Aorta (tissue), 5 donors: ENCODE measurements at regions of chr3 and their contacts with region 1.

Region 1: DNA sequence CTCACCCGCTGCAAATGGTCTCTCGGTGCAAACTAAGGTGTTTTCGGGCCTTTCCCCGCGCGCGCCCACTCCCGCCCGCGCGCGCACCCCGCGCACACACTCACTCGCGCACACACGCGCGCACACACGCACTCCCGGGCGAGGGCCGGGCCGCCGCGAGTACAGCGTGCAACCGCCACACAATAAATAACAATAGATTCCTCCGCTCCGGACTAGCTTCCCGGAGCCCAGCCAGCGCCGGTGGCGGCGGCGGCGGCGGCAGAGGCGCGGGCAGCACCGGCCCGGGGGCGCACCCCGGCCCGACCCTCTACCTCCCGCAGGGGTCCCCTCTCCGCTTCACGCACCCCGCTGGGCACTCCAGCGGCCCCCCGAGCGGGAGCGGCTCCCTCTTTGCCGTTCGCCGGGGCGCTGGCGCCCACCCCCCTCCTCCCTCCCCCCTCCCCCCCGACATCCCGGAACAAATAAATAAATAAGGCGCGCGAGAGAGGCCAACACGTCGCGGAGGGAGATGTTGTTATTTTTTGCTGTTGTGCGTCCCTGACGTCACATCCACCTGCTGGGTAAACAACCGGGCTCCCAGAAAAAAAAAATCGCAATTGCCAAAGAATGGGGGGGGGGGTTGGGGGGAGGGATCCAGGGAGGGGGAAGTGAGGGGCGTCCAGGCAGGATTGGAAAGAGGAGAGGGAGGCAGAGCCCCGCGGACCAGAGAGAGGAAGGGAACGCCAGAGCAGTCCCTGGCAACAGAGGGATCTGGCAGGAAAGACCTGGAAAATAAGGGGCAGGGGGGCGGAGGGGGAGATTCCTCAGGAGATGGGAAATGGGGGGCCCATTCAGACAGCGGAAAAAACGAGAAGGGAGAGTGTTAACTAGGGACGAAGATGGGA is at the start of gene FOXP1:
- DNase-seq: peak; percentile 85 to 90
- ATAC-seq: peak; percentile 73
- H3K4me3 ChIP-seq: peak within 1 kb of the TSS; percentile 67 to 82
- H3K27ac ChIP-seq: peak within 1 kb of the TSS; percentile 97 to 99
- H3K4me1 ChIP-seq: no peaks in the 10 kb centered on the region
- H3K27me3 ChIP-seq: no peaks in the 10 kb centered on the region
- total RNA-seq, gene FOXP1: 187 to 263 TPM

Region 2: DNA sequence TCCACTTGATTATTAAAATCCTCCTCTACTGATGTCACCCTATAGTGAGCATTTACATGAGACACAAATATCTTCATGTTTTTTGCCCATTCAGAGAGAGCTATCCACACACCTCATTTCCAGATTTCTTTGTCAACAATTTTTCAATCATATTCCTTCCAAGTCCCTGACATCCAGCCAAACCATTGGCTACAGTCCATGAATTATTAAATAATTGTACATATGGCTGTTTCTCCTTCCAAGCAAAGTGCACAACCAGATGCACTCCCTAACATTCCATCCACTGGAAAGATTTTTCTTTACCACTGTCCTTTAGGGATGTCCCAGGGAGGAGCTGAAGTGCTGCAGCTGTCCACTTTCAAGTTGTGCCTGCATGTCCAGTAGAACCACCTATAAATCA is 943.3 kb before region 1 on chr3:
- intact Hi-C with region 1: no loop called
- DNase-seq: no peak
- ATAC-seq: no peak
- H3K4me3 ChIP-seq: no peak overlapping the region
- H3K27ac ChIP-seq: no peak overlapping the region
- H3K4me1 ChIP-seq: no peaks in the 10 kb centered on the region
- H3K27me3 ChIP-seq: no peaks in the 10 kb centered on the region

Region 3: DNA sequence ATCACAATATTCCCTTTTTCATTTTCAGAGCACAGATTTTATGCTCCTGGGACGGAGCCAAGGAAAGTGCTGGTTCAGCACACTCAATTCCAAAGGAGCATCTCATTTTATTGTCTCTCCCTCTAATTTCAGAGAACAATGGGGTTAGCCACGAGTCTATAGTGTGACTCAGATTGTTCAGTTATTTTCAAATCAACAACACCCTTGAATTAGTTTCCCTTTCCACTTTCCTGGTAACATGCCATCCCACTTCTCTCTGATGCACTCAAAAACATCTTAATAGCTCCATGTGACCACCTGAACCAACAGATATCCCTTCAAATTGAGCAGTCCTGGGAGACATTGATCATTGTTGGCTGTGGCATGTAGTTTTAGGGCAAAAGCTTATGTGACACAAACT is 881.7 kb before region 1 on chr3:
- intact Hi-C with region 1: loop called in 1 of 2 experiments (anchors 10 kb)
- DNase-seq: no peak
- ATAC-seq: no peak
- H3K4me3 ChIP-seq: no peak overlapping the region
- H3K27ac ChIP-seq: no peak overlapping the region
- H3K4me1 ChIP-seq: peaks cover 8 to 15% of the 10 kb centered on the region in 2 donors
- H3K27me3 ChIP-seq: no peaks in the 10 kb centered on the region

Region 4: DNA sequence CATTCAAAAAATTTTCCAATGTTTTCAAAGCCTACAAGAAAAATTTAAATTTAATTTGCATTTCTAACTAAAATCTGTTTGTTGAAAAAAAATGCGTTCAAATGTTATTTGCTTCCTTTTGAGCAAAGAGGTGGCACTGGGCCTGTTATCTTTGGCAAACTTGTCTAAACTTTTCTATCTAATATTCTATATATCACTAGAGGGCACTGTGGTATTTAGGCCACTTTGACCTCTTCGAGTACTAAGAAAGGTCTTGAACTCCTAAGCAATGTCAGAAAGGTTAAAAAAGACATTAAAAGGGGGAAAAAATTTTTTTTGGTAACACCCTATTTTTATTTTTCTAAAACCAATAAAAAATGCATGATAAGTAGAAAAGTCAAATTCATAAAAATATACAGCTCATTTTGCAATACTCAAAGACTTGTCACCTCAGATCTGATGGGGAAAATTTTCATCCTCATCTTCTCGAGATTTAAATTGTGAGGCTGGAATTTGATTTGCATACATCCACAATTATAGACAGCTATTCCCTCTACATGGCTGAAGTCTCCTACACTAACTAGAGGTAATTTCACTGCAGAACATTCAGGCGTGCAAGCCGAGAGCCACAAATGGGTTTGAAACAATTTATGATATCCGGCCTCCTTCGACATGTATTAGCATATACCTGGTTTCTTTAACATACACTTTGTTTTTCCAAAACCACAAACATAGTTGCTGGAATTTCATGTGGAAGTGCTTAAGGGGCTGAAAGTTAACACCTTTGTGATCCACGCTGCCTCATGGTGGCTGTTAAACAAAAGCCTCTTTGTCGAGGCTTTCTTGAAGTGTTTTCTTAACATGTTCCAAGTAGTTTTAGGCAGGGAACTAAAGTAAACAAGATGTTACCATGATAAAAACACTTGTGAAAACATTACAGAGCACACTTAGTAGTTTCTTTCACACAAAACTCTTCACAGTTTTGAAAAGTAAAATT is 576.7 kb before region 1 on chr3:
- intact Hi-C with region 1: loop called in 1 of 2 experiments (anchors 10 kb)
- DNase-seq: no peak
- ATAC-seq: peak; percentile 75
- H3K4me3 ChIP-seq: no peak overlapping the region
- H3K27ac ChIP-seq: peak overlapping the region; percentile 63 to 67
- H3K4me1 ChIP-seq: peaks cover 11 to 14% of the 10 kb centered on the region in 2 donors
- H3K27me3 ChIP-seq: no peaks in the 10 kb centered on the region

Region 5: DNA sequence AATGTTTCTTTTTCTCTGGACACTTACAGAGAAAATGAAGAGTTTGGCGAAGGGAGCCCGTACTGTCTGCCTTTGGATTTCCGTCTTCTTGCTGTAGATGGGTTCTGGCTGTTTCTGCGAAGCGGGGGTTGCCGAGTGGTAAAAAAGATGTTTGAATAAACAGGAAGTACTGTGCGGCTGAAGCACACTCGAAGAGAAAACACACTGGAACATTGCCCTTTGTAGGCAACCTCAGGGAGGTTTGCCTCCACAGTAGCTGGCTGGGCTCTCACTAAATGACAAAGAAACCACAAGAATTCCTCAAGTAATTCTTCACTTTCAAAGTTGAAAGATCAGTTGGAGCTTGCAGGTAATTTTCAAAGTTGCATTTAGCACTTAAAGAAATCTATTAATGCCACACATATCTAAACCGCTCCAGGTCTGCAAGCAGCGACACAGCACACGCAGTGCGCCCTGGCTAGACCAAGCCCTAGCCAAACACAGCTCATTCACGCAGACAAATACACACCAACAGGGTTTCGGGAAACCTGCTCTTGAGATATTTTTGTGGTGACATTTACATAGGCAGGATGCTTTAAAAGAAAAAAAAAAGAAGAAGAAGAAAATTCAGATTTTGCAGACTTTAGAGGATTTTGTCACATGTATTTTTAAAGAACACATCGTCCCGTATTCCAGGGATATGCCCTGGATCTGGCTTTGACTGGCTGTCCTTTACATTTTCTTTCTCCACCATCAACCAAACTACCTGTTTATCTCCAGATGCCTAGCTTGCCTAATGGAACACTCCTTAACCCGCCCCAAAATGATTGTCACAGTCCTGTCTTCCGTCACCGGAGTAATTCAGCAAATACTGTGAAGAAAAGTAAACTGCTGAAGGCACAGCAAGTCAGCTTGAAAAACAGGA is 453.1 kb before region 1 on chr3:
- intact Hi-C with region 1: loop called in 1 of 2 experiments (anchors 5 kb)
- DNase-seq: peak in 1 of 2 donors; percentile 82
- ATAC-seq: peak; percentile 69
- H3K4me3 ChIP-seq: peak overlapping the region; percentile 89 to 99
- H3K27ac ChIP-seq: peak overlapping the region; percentile 98 to 99
- H3K4me1 ChIP-seq: peaks cover 0 to 2% of the 10 kb centered on the region in 2 donors
- H3K27me3 ChIP-seq: no peaks in the 10 kb centered on the region

Region 6: DNA sequence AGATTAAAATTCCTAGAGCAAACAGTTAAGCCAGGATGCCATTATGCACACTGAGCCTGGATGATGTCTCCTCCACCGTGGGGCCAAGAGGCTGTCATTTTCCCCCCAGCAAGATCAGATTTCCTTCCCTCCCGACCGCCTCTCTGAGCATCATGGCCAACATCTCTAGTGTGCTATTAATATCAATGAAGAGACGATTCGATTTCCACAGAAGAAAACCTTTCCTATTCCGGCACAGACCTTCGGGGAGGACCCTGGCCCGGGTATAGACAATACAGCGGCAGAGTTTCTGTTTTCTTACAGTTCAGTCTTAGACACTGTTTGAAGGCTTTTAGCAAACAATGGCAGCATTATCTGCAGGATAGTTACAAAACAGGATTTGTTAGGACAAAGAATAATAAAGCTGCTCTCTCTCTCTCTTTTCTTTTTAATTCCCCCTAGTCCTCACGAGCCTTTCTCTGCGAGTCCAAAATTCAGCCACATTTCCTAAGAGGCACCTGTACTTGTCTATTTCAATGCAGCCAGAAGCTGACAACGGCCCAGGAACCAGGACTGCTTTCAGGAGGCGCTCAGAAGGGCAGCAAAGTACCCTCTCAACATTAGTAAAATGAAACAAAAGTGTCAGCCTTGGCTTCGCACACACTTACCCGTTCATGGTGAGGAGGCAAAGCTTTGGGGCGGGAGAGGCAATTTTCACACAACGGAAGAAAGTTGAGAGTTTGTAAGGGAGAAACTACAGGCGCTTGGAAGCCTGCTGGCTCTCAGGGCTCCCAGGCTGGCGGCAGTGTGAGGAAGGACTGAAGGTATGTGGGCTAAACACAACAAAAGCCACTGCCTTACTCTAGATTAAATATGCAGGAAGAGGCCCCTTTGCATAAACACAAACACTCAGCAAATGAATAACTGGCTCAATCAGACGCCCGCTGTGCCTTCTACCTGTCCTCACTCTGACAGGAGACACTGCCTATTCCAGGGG is 278.3 kb before region 1 on chr3:
- intact Hi-C with region 1: loop called (anchors 5 to 10 kb)
- DNase-seq: no peak
- ATAC-seq: peak; percentile 77
- H3K4me3 ChIP-seq: peak overlapping the region; percentile 59 to 93
- H3K27ac ChIP-seq: peak overlapping the region; percentile 23 to 88
- H3K4me1 ChIP-seq: peaks cover 0 to 8% of the 10 kb centered on the region in 2 donors
- H3K27me3 ChIP-seq: no peaks in the 10 kb centered on the region

Region 7: DNA sequence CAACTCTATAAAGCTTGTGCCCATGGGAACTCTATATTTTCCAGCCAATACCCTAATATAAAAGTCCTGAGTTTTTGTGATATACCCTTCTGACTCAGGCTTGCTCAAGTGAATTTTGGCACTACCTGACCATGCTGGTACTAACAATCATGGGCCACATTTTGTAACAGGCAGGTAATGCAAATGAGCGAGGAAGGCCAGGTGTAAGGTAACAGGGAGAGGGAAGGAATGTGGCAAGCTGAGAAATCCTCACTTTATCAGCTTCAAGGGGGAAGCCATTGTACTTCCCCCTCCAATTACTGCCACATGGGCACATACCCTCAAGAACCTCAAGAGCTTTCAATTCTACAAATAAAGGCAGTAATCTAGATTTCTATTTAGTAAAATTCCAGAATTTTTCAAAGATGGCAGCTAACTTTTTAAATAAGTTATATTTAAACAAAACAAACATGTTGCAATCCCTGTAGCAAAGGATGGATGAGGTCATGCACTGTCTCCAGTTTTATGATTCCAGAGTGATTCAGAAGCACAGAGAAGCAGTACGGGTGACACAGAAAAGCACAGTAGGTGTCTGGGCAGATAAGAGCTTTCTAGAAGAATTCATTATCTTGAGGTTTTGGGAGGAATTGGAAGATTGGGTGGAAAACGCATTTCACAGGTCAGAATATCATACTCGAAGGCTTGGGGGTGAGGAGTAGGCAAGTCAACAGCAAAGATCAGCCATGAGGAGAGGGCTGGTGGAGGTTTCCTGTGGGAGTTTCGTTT is 87.9 kb before region 1 on chr3:
- intact Hi-C with region 1: loop called (anchors 1 to 5 kb)
- DNase-seq: no peak
- ATAC-seq: peak; percentile 69
- H3K4me3 ChIP-seq: no peak overlapping the region
- H3K27ac ChIP-seq: peak overlapping the region; percentile 70 to 91
- H3K4me1 ChIP-seq: peaks cover 4 to 11% of the 10 kb centered on the region in 2 donors
- H3K27me3 ChIP-seq: no peaks in the 10 kb centered on the region

Region 8: DNA sequence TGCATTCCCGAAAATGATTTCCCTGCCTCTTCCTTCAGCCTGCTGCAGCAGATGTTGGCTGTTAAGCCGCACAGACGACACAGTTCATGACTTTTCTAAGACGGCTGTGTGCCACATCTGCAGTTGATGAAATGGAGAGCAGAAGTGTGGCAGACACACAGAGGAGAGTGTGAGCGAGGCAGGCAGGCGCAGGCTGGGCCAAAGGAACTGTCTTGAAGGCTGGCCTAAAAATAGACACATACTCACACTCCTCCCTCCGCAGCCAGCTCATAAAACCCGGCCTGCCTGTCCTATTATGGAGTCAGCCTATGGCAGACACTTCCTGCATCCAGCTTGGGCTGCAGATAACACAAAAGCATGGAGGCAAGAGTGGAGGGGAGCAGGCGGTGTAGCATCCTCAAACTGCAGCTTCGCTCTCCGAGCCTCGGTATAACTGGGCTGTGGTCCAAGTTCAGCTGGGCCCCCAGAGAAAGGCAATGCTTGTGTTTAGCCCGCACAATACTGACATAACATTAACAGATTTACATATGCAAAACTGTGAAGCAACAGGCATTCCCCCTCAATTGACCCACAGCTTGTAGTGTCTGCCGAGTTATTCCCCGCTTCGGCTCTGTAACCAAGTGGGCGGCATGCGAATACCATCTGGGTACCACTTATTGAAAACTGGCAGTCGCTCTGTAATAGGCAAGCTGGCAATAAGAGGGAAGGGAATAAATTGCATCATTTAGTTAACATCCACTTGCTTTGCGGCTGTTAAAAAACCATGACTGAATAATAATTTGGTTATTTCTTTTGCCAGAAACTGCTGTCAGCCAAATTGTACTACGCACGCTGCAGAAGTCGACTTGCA is 41.1 kb before region 1 on chr3:
- intact Hi-C with region 1: loop called (anchors 1 to 5 kb)
- DNase-seq: peak; percentile 92 to 94
- ATAC-seq: peak; percentile 93
- H3K4me3 ChIP-seq: peak overlapping the region; percentile 22 to 84
- H3K27ac ChIP-seq: peak overlapping the region; percentile 61 to 100
- H3K4me1 ChIP-seq: peaks cover 3 to 6% of the 10 kb centered on the region in 2 donors
- H3K27me3 ChIP-seq: no peaks in the 10 kb centered on the region

Region 9: DNA sequence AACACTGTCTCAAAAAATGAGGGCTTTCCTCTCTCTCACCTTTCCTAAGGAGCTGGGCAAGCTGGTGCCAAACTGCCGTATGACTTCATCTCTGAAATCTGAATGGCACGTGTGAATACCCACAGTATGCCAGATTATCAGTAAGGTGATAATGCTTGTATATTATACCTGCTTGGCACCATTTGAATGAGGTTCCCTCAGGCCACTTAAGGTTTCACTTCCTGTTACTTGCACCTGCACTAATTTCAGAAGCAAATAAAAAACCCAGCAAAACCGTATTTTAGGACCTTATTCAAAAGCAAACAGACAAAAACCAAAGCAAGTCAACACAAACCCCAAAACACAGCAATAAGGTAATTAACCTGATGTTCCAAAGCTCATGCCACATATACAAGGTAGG is 20.0 kb before region 1 on chr3:
- intact Hi-C with region 1: no loop called
- DNase-seq: no peak
- ATAC-seq: no peak
- H3K4me3 ChIP-seq: no peak overlapping the region
- H3K27ac ChIP-seq: no peak overlapping the region
- H3K4me1 ChIP-seq: peaks cover 0 to 2% of the 10 kb centered on the region in 2 donors
- H3K27me3 ChIP-seq: no peaks in the 10 kb centered on the region

Region 10: DNA sequence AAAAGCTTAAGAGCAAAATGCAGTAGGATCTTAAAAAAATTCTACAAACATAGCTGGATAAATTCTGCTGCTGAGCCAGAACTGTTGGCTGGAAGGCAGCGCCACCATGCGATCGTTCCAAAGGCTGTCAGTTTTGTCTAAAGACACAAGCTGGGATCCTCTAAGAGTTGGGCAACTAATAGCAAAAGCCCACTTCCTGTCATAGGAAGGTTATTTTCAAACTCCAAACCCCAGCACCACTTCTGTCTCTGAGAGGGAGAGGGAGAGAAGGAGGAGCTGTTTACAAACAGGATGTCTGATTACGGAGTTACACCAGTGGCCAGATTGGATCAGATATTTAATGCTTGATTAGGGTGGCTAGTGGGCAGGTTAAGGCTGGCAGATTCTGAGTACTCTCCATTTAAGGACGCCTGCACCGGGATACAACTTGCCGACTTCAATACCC is 97.4 kb after region 1 on chr3:
- intact Hi-C with region 1: no loop called
- DNase-seq: peak; percentile 80 to 83
- ATAC-seq: peak; percentile 68
- H3K4me3 ChIP-seq: no peak overlapping the region
- H3K27ac ChIP-seq: no peak overlapping the region
- H3K4me1 ChIP-seq: no peaks in the 10 kb centered on the region
- H3K27me3 ChIP-seq: no peaks in the 10 kb centered on the region